Calu3 (cell line): ENCODE measurements at regions of chr7 and their contacts with region 1.

Region 1: DNA sequence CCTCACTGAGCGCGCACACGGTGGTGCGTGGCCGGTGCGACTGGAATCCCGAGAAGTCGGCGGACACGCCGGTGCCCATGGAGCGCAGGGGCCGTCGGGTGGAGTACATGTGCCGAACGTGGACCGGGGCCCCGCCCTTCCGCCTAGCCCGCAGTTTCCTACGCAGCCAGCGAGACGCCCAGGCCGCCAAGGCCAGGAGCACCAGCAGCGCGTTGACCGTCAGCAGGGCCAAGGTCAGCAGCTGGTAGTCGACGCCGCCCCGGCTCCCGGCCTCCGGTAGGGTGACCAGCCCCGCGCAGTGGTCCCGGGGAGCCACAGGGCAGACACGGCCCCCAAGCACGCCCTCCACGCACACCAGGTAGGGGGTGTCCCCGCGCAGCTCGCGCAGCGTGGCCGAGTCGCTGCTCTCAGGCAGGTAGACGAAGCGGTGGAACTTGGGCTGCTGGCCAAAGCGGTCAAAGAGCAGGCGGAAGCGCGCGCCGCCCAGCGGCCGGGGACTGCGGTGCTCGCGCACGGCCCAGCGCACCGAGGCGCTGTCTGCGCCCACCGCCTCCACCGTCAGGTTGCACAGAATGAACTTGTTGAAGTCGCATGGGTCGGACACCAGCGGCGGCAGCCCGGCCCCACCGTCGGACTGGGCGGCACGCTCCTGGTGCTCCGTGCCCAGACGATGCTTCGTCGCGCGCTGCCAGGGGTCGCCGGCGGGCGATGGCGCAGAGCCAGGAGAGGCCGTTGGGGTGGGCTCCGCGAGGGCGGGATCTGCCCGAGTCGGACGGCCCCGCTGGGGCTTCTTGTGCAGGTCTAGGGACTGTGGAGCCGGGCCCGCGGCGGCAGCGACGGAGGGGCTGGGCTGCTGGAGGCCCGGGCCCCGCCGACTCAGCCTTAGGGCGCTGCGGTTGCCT is 2.2 kb downstream of the TRIL start:
- DNase-seq: peak; percentile 93
- H3K4me3 Mint-ChIP-seq: peak overlapping the region; percentile 93
- H3K27ac Mint-ChIP-seq: peak overlapping the region; percentile 35
- H3K4me1 Mint-ChIP-seq: peaks cover 14% of the 10 kb centered on the region
- H3K27me3 Mint-ChIP-seq: no peaks in the 10 kb centered on the region
- CTCF ChIP-seq: peak; percentile 91

Region 2: GRCh38 chr7:28872226-28872625 is 83.7 kb before region 1 on chr7:
- CTCF ChIA-PET with region 1: no interaction called
- intact Hi-C with region 1: no loop called
- DNase-seq: no peak
- H3K4me3 Mint-ChIP-seq: no peak overlapping the region
- H3K27ac Mint-ChIP-seq: no peak overlapping the region
- H3K4me1 Mint-ChIP-seq: no peaks in the 10 kb centered on the region
- H3K27me3 Mint-ChIP-seq: no peaks in the 10 kb centered on the region
- CTCF ChIP-seq: no peak

Region 3: DNA sequence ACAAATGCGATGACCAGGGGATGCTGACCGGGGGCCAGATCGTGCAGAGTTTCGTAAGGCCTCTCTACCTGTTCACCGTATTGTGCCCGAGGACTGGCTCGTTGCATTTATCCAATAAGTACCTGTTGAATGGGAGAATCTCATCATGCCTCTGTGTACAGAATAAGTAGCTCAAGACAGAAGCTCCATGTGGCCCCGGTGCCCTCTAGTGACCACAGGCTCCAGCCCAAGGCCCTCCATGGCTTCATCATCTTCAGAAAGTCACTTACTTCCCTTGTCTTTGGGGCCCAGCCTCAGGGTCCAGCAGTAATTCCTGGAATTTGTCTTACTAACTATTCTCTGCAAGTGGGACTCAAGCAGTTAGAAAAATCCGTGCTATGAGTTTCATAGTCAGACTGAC is 389.6 kb after region 1 on chr7:
- CTCF ChIA-PET with region 1: interaction called, 18 read pairs
- intact Hi-C with region 1: no loop called
- DNase-seq: peak; percentile 81
- H3K4me3 Mint-ChIP-seq: no peak overlapping the region
- H3K27ac Mint-ChIP-seq: no peak overlapping the region
- H3K4me1 Mint-ChIP-seq: no peaks in the 10 kb centered on the region
- H3K27me3 Mint-ChIP-seq: no peaks in the 10 kb centered on the region
- CTCF ChIP-seq: no peak

Region 4: DNA sequence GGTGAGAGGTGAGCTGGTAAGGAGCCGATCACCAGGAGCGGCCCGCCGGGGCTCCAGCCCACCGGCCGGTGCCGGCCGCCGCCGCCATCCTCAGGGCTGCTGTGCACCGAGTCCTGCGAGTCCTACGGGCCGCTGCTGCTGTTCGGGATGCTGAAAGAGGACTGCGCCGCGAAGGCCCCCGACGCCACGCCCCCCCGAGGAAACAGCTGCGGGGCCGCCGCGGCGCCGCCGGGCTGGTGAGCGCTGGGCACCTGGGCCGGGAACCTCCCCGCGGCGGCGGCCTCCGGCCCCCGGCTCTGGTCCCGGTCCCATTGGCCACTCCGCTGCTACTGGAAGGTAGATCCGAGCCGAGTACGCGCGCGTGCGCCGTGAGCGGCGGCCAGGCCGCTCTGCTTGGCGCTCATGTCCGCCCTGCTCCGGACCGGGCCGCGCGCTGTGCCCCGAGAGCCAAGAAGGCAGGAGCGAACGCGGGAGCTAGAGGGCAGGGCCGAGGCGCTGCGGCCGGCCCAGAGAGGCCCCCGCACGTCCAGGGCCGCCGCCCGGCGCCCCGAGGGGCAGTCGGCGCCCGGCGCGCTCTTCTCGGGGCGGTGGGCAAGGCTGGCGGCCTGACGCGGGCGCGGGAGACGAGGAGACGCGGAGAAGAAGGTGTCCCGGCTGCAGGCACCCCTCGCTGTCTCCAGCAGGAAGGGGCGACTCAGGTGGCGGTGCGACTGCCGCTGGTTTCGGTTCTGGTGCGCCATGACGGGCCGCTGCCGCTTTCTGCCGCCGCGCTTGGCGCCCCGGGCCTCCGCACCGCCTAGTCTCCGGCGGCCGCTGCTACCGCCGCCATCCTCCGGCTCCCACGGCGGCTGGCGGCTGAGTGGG is 729.0 kb after region 1 on chr7:
- CTCF ChIA-PET with region 1: no interaction called
- intact Hi-C with region 1: no loop called
- DNase-seq: peak; percentile 86
- H3K4me3 Mint-ChIP-seq: peak overlapping the region; percentile 100
- H3K27ac Mint-ChIP-seq: peak overlapping the region; percentile 83
- H3K4me1 Mint-ChIP-seq: peaks cover 16% of the 10 kb centered on the region
- H3K27me3 Mint-ChIP-seq: no peaks in the 10 kb centered on the region
- CTCF ChIP-seq: no peak